Left colon (tissue), 2 donors: ENCODE measurements at regions of chr1 and their contacts with region 1.

Region 1: GRCh38 chr1:170881268-170882265 is 53.8 kb upstream of the MROH9 start:
- DNase-seq: no peak
- ATAC-seq: peak; percentile 30

Region 2: DNA sequence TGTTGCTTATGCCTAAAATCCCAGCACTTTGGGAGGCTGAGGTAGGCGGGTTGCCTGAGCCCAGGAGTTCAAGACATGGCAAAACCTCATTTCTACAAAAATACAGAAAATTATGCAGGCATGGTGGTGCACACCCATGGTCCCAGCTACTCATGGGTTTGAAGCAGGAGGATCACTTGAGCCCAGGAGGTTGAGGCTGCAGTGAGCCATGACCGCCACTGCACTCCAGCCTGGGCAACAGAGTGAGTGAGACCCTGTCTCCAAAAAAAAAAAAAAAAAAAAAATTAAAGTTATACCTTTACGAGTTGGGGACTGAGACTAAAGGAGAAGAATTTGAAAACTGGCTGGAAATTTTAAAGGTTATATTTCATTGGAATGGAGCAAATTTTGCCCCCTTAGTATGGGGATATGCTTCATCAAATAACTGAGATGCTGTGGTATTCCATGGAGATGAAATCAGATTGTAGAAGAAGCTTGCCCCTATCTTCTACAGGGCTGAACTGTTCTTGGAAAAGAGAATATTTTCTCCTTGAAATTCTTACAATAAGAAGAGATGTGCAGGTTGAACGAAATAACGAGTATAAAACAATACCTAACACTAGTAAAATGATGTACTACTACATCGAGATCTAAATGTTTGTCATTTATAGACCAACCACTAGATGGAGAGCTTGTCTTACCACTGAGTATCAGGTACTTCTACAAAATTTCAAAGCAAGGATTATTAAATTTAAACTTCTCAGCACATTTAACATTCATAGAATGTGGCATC is 952.9 kb before region 1 on chr1:
- intact Hi-C with region 1: loop called in 1 of 2 experiments (anchors 10 kb)
- DNase-seq: no peak
- ATAC-seq: peak; percentile 61

Region 3: DNA sequence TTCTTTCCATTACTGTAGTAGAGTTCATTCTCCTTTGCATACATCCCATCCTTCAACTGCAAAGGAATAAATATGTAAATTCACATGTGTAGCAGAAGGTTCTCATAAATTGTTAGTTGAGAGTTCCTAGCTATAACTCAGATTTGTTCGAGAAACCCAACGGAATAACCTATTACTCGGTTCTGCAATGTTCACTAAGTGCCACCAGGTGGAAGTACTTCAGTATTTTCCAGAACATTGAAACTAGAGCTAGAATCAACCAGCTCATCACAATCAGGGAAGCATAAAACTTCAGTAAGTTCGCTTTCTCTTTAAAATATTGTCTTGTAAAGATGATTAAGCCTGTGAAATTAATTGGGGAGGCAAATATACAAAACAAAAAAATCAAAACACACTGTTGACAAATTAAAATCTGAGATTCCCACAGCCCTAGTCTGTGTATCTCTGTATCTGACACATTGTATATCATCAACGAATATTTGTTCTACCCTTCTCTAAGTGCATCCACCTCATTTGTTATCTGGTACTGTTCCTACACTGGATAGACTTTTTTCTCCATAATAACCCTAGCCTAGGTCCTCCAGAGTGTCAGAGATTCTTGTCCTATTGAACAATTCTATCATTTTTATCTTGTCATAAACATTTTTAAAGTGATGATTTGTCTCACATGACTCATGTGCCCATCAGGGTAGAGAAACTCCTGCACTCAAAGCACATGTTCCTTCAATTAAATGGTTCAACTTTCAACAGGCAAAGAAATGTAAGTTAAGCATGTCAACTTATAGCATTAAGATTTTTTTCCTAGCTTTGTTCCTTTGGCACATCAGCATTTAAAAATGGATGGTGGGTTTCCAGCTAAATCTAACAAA is 85.7 kb after region 1 on chr1:
- intact Hi-C with region 1: no loop called
- DNase-seq: no peak
- ATAC-seq: peak; percentile 69